ENCODE measurements at regions of chr1 and their contacts with region 1.

Region 1: DNA sequence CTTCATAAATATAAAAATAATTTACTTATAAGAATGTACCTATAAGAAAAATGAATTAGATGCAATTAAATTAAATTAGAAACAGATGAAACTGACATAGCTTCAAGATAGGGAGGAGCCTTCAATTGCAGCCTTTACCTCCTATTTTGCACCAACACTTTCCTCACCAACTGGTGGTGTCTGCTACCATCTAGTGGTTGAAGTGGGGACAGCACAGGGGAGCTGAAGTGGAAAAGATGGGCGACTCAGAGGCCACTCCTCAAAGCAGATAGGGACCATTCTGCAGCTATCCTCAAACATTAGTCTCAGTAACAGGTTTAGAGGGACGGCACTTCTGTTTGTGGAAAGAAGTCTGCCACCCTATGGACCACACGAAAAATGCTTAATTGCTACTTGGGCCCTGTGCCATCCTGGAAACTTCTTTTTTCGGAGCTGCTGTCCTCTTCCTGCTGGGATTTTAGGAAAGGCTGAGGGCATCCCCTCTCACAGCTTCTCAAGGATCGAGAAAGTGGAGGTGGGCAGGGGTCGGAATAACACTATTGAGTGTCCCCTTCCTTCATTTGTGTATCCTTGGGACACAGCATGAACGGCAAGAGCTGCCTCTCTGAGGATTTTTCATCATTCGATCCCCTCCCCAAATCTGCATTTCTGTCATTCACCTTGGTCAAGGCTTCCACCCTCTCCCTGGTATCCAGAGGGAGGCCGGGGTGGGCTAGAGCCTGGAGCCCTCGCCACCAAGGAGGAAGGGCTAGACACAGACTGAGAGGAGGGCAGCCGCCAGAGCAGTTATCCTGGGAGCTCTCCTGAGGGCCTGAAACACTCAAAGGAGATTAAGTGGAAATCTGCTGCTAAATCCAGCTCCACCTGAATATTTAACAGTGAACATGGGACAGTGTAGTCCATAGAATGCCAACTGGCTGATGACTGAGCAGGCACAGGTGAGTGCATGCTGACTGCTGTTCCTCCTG is 9.6 kb downstream of the PROK1 start:
- DNase-seq: peak; percentile 78 to 84 (median 83)
- H3K4me3 ChIP-seq: no peak overlapping the region
- H3K4me3 Mint-ChIP-seq: no peak overlapping the region
- H3K27ac ChIP-seq: no peak overlapping the region
- H3K27ac Mint-ChIP-seq: no peak overlapping the region
- H3K4me1 ChIP-seq: no peaks in the 10 kb centered on the region
- H3K4me1 Mint-ChIP-seq: no peaks in the 10 kb centered on the region
- H3K27me3 ChIP-seq: no peaks in the 10 kb centered on the region
- H3K27me3 Mint-ChIP-seq: peaks cover 0 to 2% of the 10 kb centered on the region in 2 donors

Region 2: DNA sequence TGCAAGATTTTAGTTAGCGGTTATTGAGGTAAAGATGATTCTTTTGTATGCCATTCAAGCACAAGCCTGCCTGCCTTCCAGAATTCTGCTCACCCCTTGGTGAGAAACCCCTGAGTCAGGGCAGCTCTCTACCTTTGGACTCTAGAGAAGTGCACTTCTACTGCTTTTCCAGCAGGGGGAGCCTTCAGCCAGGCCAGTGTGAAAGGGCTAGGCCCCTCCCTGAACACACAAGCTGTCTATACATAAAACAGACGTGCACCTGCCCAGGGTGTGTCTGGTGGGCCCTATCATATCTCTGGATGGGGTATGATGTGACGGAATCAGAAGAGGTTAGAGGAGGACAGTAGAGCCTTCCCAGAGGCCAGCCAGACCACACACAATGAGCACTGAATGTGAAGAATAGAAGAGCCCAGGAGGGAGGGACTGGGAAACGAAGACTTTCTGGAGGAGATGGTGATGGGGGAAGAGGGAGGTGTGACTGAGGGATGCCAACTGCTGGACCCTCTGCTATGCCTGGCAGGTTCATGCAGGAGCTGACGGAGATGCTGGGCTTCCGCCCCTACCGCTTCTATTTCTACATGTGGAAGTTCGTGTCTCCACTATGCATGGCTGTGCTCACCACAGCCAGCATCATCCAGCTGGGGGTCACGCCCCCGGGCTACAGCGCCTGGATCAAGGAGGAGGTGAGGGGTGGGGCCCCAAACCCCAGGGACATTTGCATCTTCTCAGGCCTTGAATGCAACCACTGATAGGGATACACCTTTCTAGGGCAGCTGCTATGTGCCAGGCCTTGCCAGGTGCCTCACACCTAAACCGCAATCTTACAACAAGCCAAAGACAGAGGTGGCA is 263.4 kb before region 1 on chr1:
- CTCF ChIA-PET with region 1: interaction called, 234 read pairs
- POLR2A ChIA-PET with region 1: interaction called, 14 read pairs
- intact Hi-C with region 1: loop called (anchors 1 kb)
- DNase-seq: peak; percentile 53 to 65 (median 63)
- H3K4me3 ChIP-seq: no peak overlapping the region
- H3K4me3 Mint-ChIP-seq: no peak overlapping the region
- H3K27ac ChIP-seq: no peak overlapping the region
- H3K27ac Mint-ChIP-seq: peak overlapping the region in 2 of 7 donors; percentile 56 to 80
- H3K4me1 ChIP-seq: no peaks in the 10 kb centered on the region
- H3K4me1 Mint-ChIP-seq: peaks cover 0 to 3% (median under 1%) of the 10 kb centered on the region in 4 donors
- H3K27me3 ChIP-seq: no peaks in the 10 kb centered on the region
- H3K27me3 Mint-ChIP-seq: no peaks in the 10 kb centered on the region

Region 3: DNA sequence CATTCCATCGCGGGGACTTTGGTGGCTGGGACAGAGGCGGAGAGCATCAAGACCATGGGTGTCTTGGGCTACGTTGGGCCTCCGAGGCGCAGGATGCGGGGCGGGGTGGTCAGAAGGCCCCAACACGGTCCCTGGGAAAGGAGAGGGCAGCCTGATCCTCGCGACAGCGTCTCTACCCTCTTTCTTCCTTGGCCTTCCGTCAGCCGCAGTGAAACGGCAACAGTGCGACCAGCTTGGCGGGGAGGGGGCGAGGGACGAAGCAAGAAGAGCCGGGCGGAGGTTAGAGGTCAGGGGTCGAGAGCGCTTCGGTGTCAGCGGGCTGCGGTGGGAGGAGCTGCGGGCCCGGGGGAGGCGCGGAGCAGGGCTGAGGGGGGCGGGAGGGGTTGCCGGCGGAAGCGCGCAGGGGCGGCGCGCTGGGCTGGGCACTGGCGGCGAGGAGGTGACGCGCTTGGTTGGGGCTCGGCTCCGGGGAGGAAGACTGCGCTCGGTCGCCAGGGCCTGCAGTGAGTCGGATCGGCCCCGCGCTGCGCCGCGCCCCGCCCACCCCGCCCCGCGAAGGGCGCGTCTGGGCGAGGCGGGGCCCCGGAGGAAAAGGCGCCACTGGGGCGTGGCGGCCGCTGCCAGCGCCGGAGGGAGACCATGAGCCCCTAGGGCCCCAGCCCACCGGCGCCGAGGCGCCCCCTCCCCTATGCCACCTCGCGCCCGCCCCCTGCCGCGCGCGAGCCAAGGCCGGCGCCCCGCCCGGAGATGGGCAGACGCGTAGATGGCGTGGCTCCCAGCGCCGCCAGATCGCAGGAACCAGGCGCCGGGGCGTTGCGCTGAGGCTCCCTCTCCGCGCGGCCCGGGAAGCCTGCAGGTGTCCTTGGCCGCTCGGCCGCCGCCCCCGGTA is 250.6 kb before region 1 on chr1 and contains the start of gene KCNC4:
- CTCF ChIA-PET with region 1: interaction called, 234 read pairs
- POLR2A ChIA-PET with region 1: interaction called, 8 read pairs
- intact Hi-C with region 1: loop called (anchors 1 kb)
- DNase-seq: peak; percentile 91 to 95 (median 94)
- H3K4me3 ChIP-seq: peak within 1 kb of the TSS; percentile 36 to 68
- H3K4me3 Mint-ChIP-seq: peak within 1 kb of the TSS; percentile 87 to 95 (median 89)
- H3K27ac ChIP-seq: peak within 1 kb of the TSS; percentile 81
- H3K27ac Mint-ChIP-seq: peak within 1 kb of the TSS; percentile 89 to 98 (median 97)
- H3K4me1 ChIP-seq: peaks cover 44% of the 10 kb centered on the region
- H3K4me1 Mint-ChIP-seq: peaks cover 32 to 64% (median 45%) of the 10 kb centered on the region in 4 donors
- H3K27me3 ChIP-seq: no peaks in the 10 kb centered on the region
- H3K27me3 Mint-ChIP-seq: no peaks in the 10 kb centered on the region
- total RNA-seq, gene KCNC4: 11.9 to 13.4 TPM

Region 4: DNA sequence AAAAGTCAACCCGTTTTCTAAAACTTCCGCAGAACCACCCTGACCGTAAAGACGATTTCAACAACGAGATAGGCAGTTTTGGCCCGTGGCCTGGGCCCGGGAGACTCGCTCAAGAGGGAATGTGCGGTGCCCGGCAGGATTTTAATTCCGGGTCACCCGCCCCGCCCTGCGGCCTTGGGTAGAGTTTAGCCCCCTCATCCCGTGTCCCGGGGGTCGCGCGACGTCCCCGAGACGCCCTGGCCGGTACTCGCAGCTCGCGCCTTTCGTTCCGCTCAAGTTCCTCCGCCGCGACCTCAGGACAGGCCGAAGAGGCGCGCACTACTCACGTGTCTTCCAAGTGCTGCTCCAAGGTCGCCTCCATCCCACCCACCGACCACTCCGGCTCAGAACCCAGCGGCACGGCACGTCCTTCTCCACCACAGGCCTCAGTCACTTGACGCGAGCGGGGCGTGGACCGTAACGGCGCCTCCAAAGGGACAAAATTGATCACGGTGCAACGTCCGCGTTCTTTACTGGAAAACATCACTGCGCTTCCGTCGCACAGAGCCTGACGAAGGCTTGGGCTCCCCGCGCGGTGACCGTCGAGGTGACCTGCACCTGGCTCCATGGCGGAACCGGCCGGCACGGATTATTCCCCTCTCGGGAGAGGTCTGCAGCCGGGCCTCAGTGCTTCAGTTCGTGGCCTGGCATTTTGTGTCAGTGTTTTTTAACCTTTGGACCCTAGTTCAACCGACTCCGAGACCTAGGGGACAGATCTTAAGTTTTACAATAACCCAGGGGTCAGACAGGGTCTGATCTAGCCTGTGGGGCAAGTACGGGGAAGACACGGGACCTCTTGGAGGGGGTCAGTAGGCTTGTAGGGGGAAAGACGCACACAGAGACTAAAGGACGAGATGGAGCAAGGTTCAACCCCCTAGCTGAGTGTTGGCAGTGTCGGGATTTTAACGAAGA is 53.0 kb before region 1 on chr1 and contains the start of gene LAMTOR5:
- CTCF ChIA-PET with region 1: interaction called, 73 read pairs
- POLR2A ChIA-PET with region 1: no interaction called
- intact Hi-C with region 1: loop called (anchors 1 kb)
- DNase-seq: peak; percentile 89 to 91 (median 90)
- H3K4me3 ChIP-seq: peak within 1 kb of the TSS; percentile 83 to 98
- H3K4me3 Mint-ChIP-seq: peak within 1 kb of the TSS; percentile 96 to 100 (median 99)
- H3K27ac ChIP-seq: peak within 1 kb of the TSS; percentile 87
- H3K27ac Mint-ChIP-seq: peak within 1 kb of the TSS; percentile 95 to 100 (median 99)
- H3K4me1 ChIP-seq: peaks cover 28% of the 10 kb centered on the region
- H3K4me1 Mint-ChIP-seq: peaks cover 17 to 34% (median 24%) of the 10 kb centered on the region in 4 donors
- H3K27me3 ChIP-seq: no peaks in the 10 kb centered on the region
- H3K27me3 Mint-ChIP-seq: no peaks in the 10 kb centered on the region
- total RNA-seq, gene LAMTOR5: 64.5 to 69.6 TPM

Region 5: DNA sequence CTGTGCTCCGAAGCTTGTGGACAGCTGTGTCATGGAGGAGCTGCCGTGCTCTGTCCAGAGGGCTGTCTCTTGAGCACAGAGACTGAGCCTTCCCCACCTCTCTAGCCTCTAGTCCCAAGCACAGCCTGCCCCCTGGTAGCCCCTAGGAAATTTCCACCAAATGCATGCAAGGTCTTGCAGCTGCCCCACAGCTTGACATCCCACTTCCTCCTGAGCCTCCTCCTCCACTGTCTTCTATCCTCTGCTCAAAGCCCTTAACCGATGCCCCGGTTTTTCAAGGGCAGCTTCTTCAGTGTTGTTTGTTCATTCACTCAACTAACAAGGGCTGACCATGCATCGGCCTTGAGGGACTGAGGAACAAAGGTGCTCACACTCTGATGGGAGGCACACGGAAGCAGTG is 30.2 kb before region 1 on chr1:
- CTCF ChIA-PET with region 1: interaction called, 16 read pairs
- POLR2A ChIA-PET with region 1: no interaction called
- intact Hi-C with region 1: no loop called
- DNase-seq: no peak
- H3K4me3 ChIP-seq: no peak overlapping the region
- H3K4me3 Mint-ChIP-seq: no peak overlapping the region
- H3K27ac ChIP-seq: no peak overlapping the region
- H3K27ac Mint-ChIP-seq: no peak overlapping the region
- H3K4me1 ChIP-seq: no peaks in the 10 kb centered on the region
- H3K4me1 Mint-ChIP-seq: peaks cover 0 to 1% (median 0%) of the 10 kb centered on the region in 4 donors
- H3K27me3 ChIP-seq: no peaks in the 10 kb centered on the region
- H3K27me3 Mint-ChIP-seq: peaks cover 5 to 18% of the 10 kb centered on the region in 2 donors

Region 6: DNA sequence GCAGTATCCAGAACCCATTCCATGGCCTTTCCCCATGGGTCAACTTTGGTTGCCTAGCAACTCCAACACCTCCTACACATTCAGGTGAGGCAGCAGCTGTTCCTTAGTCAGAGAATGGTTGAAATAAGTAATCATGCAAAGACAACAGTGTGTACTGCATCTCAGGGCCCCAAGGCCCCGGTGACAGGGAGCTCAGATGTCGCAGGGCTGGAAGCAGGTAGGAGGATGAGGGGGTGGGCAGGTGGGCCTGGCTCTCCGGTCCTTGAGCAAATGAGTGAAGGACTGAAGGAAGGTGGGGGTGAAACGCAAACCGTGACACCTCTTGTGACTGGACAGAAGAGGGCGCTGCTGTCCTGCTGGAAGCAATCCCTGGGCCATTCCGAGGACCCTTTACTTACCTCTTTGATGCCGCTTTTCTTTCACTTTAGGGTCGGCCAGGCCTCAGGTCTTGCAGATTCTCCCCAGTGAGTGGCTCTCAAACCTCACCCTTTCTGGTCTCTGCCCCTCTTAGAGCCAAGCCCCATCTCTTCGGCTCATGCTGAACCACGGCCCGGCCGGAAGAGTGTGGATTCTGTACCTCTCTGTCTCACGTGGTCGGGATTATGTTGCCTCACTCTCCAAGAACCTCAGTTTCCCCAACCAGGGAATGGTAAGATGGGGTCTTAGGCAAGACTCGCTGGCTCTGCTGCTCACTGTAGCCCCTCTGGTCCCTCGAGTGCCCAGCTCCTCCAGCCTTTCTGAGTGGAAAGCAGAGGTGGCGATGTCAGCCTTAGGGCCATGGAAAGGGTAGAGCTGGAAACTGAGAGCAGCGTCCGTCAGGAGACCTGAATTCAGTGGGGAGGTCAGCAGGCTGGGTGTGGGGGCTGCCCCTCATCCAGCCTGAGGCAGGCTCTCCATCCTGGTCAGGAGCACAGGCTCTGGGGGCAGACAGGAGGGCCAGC is 64.0 kb after region 1 on chr1:
- CTCF ChIA-PET with region 1: no interaction called
- POLR2A ChIA-PET with region 1: no interaction called
- intact Hi-C with region 1: no loop called
- DNase-seq: peak in 4 of 5 donors; percentile 25 to 48 (median 44)
- H3K4me3 ChIP-seq: no peak overlapping the region
- H3K4me3 Mint-ChIP-seq: peak overlapping the region in 5 of 8 donors; percentile 14 to 61 (median 51)
- H3K27ac ChIP-seq: no peak overlapping the region
- H3K27ac Mint-ChIP-seq: no peak overlapping the region
- H3K4me1 ChIP-seq: no peaks in the 10 kb centered on the region
- H3K4me1 Mint-ChIP-seq: peaks cover 0 to 6% (median 2%) of the 10 kb centered on the region in 4 donors
- H3K27me3 ChIP-seq: peaks cover 5% of the 10 kb centered on the region
- H3K27me3 Mint-ChIP-seq: peaks cover 15 to 28% of the 10 kb centered on the region in 2 donors

Region 7: GRCh38 chr1:110686188-110686587 is 225.7 kb after region 1 on chr1:
- CTCF ChIA-PET with region 1: no interaction called
- POLR2A ChIA-PET with region 1: no interaction called
- intact Hi-C with region 1: no loop called
- DNase-seq: peak in 4 of 5 donors; percentile 23 to 43 (median 34)
- H3K4me3 ChIP-seq: no peak overlapping the region
- H3K4me3 Mint-ChIP-seq: no peak overlapping the region
- H3K27ac ChIP-seq: no peak overlapping the region
- H3K27ac Mint-ChIP-seq: peak overlapping the region in 2 of 7 donors; percentile 19 to 56
- H3K4me1 ChIP-seq: no peaks in the 10 kb centered on the region
- H3K4me1 Mint-ChIP-seq: peaks cover 0 to 6% (median 5%) of the 10 kb centered on the region in 4 donors
- H3K27me3 ChIP-seq: no peaks in the 10 kb centered on the region
- H3K27me3 Mint-ChIP-seq: no peaks in the 10 kb centered on the region

Measured in CD4-positive, alpha-beta memory T cell (primary cell).